Activated CD4-positive, alpha-beta memory T cell treated with anti-CD3 and anti-CD28 coated beads for 36 hours (primary cell): ENCODE measurements at regions of chr1 and their contacts with region 1.

Region 1: DNA sequence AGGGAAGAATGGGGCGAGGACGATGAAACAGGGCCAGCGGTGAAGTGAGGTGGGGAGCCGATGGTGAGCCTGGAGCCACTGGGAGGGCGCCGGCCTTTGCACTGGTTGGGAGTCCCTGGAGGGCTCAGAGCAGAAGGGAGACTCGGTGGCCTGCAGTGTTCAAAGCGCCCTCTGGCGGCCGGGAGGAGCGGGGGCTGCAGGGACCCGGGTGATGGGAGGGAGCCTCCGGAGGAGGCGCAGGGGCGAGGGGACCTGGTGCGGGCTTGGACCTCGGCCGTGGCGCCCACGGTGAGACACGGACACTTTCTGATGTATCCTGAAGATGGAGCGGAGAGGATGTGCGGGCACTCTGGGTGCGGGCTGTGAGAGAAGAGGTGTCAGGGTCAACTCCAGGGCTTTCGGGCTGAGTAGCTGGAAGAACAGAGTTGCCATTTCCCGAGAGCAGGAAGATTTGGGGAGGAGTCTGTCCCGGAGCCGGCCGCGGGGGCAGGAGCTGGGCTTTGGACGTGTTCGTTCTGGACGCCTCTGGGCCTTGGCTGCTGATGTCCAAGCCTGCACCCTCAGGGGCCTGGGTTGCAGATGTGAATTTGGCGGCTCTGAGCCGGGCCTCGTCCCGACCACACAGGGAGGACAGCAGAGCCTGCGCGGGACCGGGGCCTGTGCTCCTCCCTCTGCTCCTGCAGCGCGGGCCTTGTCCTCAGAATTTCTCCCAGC is 29.7 kb downstream of the HEYL start:
- DNase-seq: peak; percentile 80
- H3K4me3 Mint-ChIP-seq: no peak overlapping the region
- H3K27ac Mint-ChIP-seq: no peak overlapping the region
- H3K4me1 Mint-ChIP-seq: peaks cover 3% of the 10 kb centered on the region
- H3K27me3 Mint-ChIP-seq: peaks cover 1% of the 10 kb centered on the region

Region 2: GRCh38 chr1:39501666-39502065 is 108.1 kb before region 1 on chr1:
- CTCF ChIA-PET with region 1: no interaction called
- POLR2A ChIA-PET with region 1: no interaction called
- intact Hi-C with region 1: no loop called
- DNase-seq: no peak
- H3K4me3 Mint-ChIP-seq: no peak overlapping the region
- H3K27ac Mint-ChIP-seq: no peak overlapping the region
- H3K4me1 Mint-ChIP-seq: no peaks in the 10 kb centered on the region
- H3K27me3 Mint-ChIP-seq: no peaks in the 10 kb centered on the region

Region 3: GRCh38 chr1:39596163-39596562 is 13.6 kb before region 1 on chr1:
- CTCF ChIA-PET with region 1: interaction called, 19 read pairs
- POLR2A ChIA-PET with region 1: interaction called, 3 read pairs
- intact Hi-C with region 1: no loop called
- DNase-seq: no peak
- H3K4me3 Mint-ChIP-seq: no peak overlapping the region
- H3K27ac Mint-ChIP-seq: no peak overlapping the region
- H3K4me1 Mint-ChIP-seq: peaks cover 15% of the 10 kb centered on the region
- H3K27me3 Mint-ChIP-seq: peaks cover 2% of the 10 kb centered on the region

Region 4: DNA sequence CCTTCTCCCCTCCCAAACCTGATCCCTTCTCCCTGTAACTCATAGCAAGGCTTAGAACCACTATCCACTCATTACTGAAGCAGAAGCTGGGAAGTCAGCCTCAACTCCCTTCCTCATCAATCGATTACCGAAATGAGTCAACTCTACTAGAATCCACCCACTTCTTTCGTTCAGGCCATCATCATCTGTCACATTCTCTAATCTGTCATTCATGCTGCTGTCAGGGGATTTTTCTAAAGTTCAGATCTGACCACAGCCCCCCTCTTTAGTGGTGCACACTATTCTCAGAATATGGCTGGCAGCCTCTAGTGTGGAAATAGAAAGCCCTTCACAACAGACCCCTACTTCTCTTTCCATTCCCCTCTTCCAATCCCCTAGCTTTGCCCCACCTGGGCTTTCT is 57.0 kb after region 1 on chr1:
- CTCF ChIA-PET with region 1: interaction called, 25 read pairs
- POLR2A ChIA-PET with region 1: no interaction called
- intact Hi-C with region 1: no loop called
- DNase-seq: peak; percentile 71
- H3K4me3 Mint-ChIP-seq: no peak overlapping the region
- H3K27ac Mint-ChIP-seq: peak overlapping the region; percentile 47
- H3K4me1 Mint-ChIP-seq: peaks cover 20% of the 10 kb centered on the region
- H3K27me3 Mint-ChIP-seq: peaks cover 27% of the 10 kb centered on the region

Region 5: DNA sequence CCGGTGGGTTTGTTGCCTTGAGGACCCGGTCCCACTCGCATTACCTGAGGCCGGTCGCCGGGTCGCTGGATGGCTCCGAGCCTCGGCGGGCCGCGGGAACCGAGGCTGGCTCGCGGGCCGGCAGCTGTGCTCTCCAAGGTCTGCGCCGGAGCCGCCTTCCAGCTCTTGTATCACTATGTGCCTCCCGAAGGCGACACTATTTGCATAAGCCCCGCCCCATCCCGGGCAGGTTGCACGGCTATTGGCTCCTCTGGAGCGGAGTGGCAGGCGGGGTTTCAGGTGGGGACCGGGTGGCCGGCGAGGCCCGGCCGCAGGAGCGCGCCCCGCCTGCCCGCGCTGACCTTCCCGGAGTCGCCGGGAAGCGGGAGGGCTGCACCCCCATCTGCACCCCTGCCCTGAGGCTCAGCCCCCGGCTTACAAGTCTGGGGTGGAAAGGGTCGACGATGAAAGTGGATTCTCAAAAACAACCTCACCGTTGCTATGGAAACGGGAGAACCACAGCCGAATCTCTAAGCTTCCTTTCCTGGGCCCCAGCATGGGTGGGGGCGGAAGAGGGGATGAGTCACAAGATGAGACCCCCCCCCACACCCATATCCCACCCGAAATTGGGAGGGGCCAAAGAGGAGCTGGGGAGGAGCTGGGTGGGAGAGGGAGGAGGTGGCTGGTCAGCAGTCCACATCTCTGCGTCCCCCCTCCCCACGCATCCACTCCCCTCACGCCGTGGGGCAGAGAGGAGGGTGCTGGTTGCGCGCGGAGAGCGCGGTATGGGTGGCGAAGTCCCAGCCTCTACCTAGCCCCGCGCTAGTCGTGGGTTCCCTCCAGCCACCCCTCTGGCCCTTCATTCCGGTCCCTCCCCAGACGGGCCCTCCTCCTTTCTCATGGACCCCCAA is 81.7 kb after region 1 on chr1 and contains the start of gene HPCAL4:
- CTCF ChIA-PET with region 1: interaction called, 10 read pairs
- POLR2A ChIA-PET with region 1: no interaction called
- intact Hi-C with region 1: no loop called
- DNase-seq: peak; percentile 90
- H3K4me3 Mint-ChIP-seq: peak within 1 kb of the TSS; percentile 70
- H3K27ac Mint-ChIP-seq: no peak within 1 kb of the TSS
- H3K4me1 Mint-ChIP-seq: peaks cover 39% of the 10 kb centered on the region
- H3K27me3 Mint-ChIP-seq: peaks cover 5% of the 10 kb centered on the region
- total RNA-seq, gene HPCAL4: 0.43 to 0.61 TPM

Region 6: GRCh38 chr1:39720094-39720999 is 110.6 kb after region 1 on chr1:
- CTCF ChIA-PET with region 1: interaction called, 63 read pairs
- POLR2A ChIA-PET with region 1: no interaction called
- intact Hi-C with region 1: loop called (anchors 2 kb)
- DNase-seq: no peak
- H3K4me3 Mint-ChIP-seq: no peak overlapping the region
- H3K27ac Mint-ChIP-seq: peak overlapping the region; percentile 0
- H3K4me1 Mint-ChIP-seq: no peaks in the 10 kb centered on the region
- H3K27me3 Mint-ChIP-seq: peaks cover 41% of the 10 kb centered on the region